CD4-positive, alpha-beta T cell (primary cell): ENCODE measurements at regions of chr19 and their contacts with region 1.

Region 1: DNA sequence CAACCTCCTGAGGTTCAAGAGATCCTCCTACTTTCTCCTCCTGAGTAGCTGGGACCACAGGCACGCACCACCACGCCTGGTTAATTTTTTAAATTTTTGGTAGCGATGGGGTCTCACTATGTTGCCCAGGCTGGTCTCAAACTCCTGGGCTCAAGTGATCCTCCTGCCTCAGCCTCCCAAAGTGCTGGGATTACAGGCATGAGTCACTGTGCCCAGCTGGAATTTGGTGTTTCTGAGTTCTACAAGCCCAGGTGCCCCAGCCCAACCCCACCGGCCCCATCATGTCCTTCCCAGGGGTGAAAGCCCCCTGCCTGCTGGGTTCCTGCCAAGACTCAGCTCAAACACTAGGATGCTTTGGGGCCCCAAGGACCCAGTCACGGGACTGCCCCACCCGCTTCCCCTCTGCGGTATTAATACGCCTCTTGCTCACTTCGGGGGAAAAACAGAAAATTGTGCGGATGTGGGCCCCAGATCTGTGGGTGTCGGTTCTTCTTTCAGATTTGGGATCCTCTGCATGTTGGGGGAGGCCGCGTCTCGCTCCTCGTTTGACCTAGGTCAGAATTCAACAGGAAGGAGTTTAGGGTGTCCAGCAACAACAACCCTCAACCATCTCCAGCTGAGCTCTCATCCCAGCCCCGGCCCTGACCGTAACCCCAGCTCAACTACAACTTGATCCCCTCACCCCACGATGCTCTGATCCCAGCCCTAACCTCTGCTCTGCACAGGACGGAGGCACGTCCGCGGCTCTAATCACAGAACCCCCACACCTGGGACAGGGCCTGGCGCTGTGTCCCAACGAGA is 3.7 kb upstream of the FCER2 start:
- DNase-seq: peak; percentile 56 to 92 (median 72)
- ATAC-seq: peak; percentile 95
- H3K4me3 ChIP-seq: peak overlapping the region; percentile 28
- H3K4me3 Mint-ChIP-seq: peak overlapping the region; percentile 78
- H3K27ac ChIP-seq: peak overlapping the region; percentile 80 to 83
- H3K27ac Mint-ChIP-seq: peak overlapping the region; percentile 97
- H3K4me1 ChIP-seq: peaks cover 57% of the 10 kb centered on the region
- H3K4me1 Mint-ChIP-seq: peaks cover 45% of the 10 kb centered on the region
- H3K27me3 ChIP-seq: no peaks in the 10 kb centered on the region
- H3K27me3 Mint-ChIP-seq: no peaks in the 10 kb centered on the region
- CTCF ChIP-seq: no peak

Region 2: GRCh38 chr19:7718668-7719067 is 13.1 kb after region 1 on chr19:
- CTCF ChIA-PET with region 1: no interaction called
- POLR2A ChIA-PET with region 1: interaction called, 3 read pairs
- intact Hi-C with region 1: loop called in 1 of 2 experiments (anchors 2 kb)
- DNase-seq: peak in 3 of 14 experiments; percentile 5 to 39 (median 31)
- ATAC-seq: peak; percentile 37
- H3K4me3 ChIP-seq: no peak overlapping the region
- H3K4me3 Mint-ChIP-seq: no peak overlapping the region
- H3K27ac ChIP-seq: no peak overlapping the region
- H3K27ac Mint-ChIP-seq: no peak overlapping the region
- H3K4me1 ChIP-seq: peaks cover 11% of the 10 kb centered on the region
- H3K4me1 Mint-ChIP-seq: no peaks in the 10 kb centered on the region
- H3K27me3 ChIP-seq: no peaks in the 10 kb centered on the region
- H3K27me3 Mint-ChIP-seq: no peaks in the 10 kb centered on the region
- CTCF ChIP-seq: no peak

Region 3: GRCh38 chr19:7783991-7784421 is 78.4 kb after region 1 on chr19:
- CTCF ChIA-PET with region 1: no interaction called
- POLR2A ChIA-PET with region 1: no interaction called
- intact Hi-C with region 1: no loop called
- DNase-seq: peak in 2 of 14 experiments; percentile 46 to 52
- ATAC-seq: no peak
- H3K4me3 ChIP-seq: no peak overlapping the region
- H3K4me3 Mint-ChIP-seq: no peak overlapping the region
- H3K27ac ChIP-seq: no peak overlapping the region
- H3K27ac Mint-ChIP-seq: no peak overlapping the region
- H3K4me1 ChIP-seq: peaks cover 12% of the 10 kb centered on the region
- H3K4me1 Mint-ChIP-seq: no peaks in the 10 kb centered on the region
- H3K27me3 ChIP-seq: peaks cover 18 to 30% of the 10 kb centered on the region in 2 experiments
- H3K27me3 Mint-ChIP-seq: peaks cover 42% of the 10 kb centered on the region
- CTCF ChIP-seq: no peak